ENCODE measurements at regions of chr10 and their contacts with region 1.

Region 1: GRCh38 chr10:10891124-10892082 is 126.3 kb upstream of the CELF2 start:
- DNase-seq: no peak
- H3K4me3 ChIP-seq: no peak overlapping the region
- H3K27ac ChIP-seq: no peak overlapping the region
- H3K4me1 ChIP-seq: no peaks in the 10 kb centered on the region
- H3K27me3 ChIP-seq: no peaks in the 10 kb centered on the region
- CTCF ChIP-seq: no peak

Region 2: DNA sequence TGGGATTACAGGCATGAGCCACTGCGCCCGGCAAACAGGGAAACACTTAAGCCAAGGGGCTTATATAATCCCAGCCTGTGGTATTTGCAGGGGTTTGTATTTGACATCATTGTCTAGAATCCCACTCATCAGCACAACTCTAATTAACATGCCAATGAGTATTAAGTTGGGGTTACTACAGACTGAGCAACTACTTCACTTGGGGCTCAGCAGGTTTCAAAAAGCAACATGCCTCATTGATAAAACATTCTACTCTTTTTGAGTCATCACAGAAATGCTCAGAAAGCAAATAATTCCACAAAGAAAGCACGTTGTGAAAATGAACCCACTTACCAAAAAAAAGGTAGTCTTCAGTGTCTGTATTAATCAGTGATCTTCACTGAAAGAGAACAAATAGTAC is 110.7 kb before region 1 on chr10:
- CTCF ChIA-PET with region 1: no interaction called
- POLR2A ChIA-PET with region 1: no interaction called
- intact Hi-C with region 1: no loop called
- DNase-seq: no peak
- H3K4me3 ChIP-seq: no peak overlapping the region
- H3K27ac ChIP-seq: no peak overlapping the region
- H3K4me1 ChIP-seq: peaks cover 22% of the 10 kb centered on the region
- H3K27me3 ChIP-seq: no peaks in the 10 kb centered on the region
- CTCF ChIP-seq: no peak

Region 3: GRCh38 chr10:11165591-11166543 is 274.5 kb after region 1 on chr10:
- CTCF ChIA-PET with region 1: interaction called, 13 read pairs
- POLR2A ChIA-PET with region 1: no interaction called
- intact Hi-C with region 1: no loop called
- DNase-seq: no peak
- H3K4me3 ChIP-seq: no peak overlapping the region
- H3K27ac ChIP-seq: no peak overlapping the region
- H3K4me1 ChIP-seq: no peaks in the 10 kb centered on the region
- H3K27me3 ChIP-seq: peaks cover 46% of the 10 kb centered on the region
- CTCF ChIP-seq: no peak